ENCODE measurements at regions of chr9 and their contacts with region 1.

Region 1: GRCh38 chr9:97468658-97469448 is 32.6 kb upstream of the TMOD1 start:
- DNase-seq: peak; percentile 43
- ATAC-seq: peak; percentile 64
- H3K4me3 Mint-ChIP-seq: no peak overlapping the region
- H3K27ac Mint-ChIP-seq: no peak overlapping the region
- H3K4me1 Mint-ChIP-seq: no peaks in the 10 kb centered on the region
- H3K27me3 Mint-ChIP-seq: no peaks in the 10 kb centered on the region

Region 2: DNA sequence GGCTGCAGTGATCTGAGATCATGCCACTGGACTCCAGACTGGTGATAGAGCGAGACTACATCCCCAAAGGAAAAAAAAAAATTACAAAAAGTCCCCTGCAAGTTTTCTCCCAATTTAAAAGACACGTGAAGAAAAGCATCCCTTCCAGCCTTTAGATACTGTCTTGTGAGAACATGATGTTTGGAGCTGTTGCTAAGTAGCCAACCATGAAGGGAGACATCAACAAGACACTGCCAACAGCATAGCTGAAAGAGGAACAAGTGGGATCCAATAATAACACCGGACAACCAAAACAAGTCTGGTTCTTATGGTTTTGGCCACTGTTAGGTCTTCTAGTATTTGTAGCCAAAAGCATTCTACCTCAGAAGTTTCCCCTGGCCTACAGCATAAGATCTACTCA is 280.3 kb before region 1 on chr9:
- CTCF ChIA-PET with region 1: no interaction called
- POLR2A ChIA-PET with region 1: no interaction called
- DNase-seq: no peak
- ATAC-seq: no peak
- H3K4me3 Mint-ChIP-seq: no peak overlapping the region
- H3K27ac Mint-ChIP-seq: no peak overlapping the region
- H3K4me1 Mint-ChIP-seq: no peaks in the 10 kb centered on the region
- H3K27me3 Mint-ChIP-seq: peaks cover 2% of the 10 kb centered on the region

Region 3: DNA sequence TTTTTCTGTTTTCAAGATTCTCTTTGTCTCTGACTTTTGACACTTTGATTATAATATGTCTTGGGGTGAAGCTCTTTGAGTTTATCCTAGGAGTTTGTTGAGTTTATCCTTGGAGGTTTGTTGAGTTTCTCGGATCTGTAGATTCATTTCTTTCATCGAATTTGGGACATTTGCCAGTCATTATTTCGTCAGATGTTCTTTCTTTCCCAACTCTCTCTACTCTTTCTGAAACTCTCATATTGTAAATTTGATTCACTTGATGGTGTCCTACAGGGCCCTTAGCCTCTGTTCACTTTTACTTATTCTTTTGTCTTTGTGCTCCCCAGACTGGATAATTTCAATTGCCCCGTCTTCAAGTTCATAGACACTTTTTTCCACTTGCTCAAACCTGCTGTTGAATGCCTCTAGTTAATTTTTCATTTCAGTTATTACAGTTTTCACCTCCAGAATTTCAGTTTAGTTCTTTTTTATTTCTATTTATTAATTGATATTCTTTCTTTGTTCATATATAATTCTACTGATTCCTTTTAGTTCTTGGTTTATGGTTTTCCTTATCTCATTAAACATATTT is 65.0 kb before region 1 on chr9:
- CTCF ChIA-PET with region 1: no interaction called
- POLR2A ChIA-PET with region 1: no interaction called
- DNase-seq: no peak
- ATAC-seq: no peak
- H3K4me3 Mint-ChIP-seq: no peak overlapping the region
- H3K27ac Mint-ChIP-seq: no peak overlapping the region
- H3K4me1 Mint-ChIP-seq: peaks cover 4% of the 10 kb centered on the region
- H3K27me3 Mint-ChIP-seq: peaks cover 52% of the 10 kb centered on the region

Region 4: DNA sequence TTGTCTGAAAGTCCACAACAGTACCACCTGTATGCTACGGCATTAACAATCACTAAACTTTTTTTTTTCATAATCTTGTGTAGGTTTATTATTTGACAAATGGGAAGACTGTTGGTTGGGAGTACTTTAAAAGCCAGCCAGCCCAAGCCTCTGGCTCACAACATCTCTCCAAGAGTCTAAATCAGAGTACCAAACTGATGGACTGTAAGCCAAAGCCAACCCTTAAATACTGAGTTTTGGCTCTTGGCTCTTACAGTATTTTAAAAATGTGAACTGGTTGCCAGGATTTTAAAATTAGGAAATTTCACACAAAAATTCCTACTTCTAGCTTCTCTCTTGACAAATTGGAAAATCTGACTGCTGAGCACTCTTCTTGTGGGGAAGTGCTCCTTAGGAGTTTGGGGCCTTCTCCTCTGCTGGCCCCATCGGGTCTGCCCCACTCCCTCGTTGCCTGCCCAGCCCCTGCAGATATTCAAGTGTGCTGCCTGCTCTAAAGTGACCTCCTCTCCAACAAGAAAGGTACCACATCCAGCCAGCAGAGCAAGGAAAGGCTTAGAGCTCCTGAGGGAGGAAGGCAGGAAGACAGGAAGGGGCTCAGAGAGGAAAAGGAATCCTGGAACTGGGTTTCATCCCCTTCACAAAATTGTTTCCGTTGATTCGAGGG is 10.8 kb after region 1 on chr9:
- CTCF ChIA-PET with region 1: interaction called, 15 read pairs
- POLR2A ChIA-PET with region 1: no interaction called
- DNase-seq: no peak
- ATAC-seq: no peak
- H3K4me3 Mint-ChIP-seq: no peak overlapping the region
- H3K27ac Mint-ChIP-seq: no peak overlapping the region
- H3K4me1 Mint-ChIP-seq: no peaks in the 10 kb centered on the region
- H3K27me3 Mint-ChIP-seq: no peaks in the 10 kb centered on the region

Region 5: GRCh38 chr9:97487107-97487506 is 18.3 kb after region 1 on chr9:
- CTCF ChIA-PET with region 1: interaction called, 15 read pairs
- POLR2A ChIA-PET with region 1: no interaction called
- DNase-seq: no peak
- ATAC-seq: no peak
- H3K4me3 Mint-ChIP-seq: no peak overlapping the region
- H3K27ac Mint-ChIP-seq: no peak overlapping the region
- H3K4me1 Mint-ChIP-seq: no peaks in the 10 kb centered on the region
- H3K27me3 Mint-ChIP-seq: no peaks in the 10 kb centered on the region

Region 6: GRCh38 chr9:97536480-97536879 is 67.6 kb after region 1 on chr9:
- CTCF ChIA-PET with region 1: no interaction called
- POLR2A ChIA-PET with region 1: no interaction called
- DNase-seq: no peak
- ATAC-seq: no peak
- H3K4me3 Mint-ChIP-seq: no peak overlapping the region
- H3K27ac Mint-ChIP-seq: no peak overlapping the region
- H3K4me1 Mint-ChIP-seq: no peaks in the 10 kb centered on the region
- H3K27me3 Mint-ChIP-seq: peaks cover 24% of the 10 kb centered on the region